ENCODE measurements at regions of chr1 and their contacts with region 1.

Region 1: GRCh38 chr1:55284852-55285251 is 69.7 kb upstream of the USP24 start:
- DNase-seq: peak in 4 of 5 donors; percentile 25 to 61 (median 42)
- H3K4me3 ChIP-seq: no peak overlapping the region
- H3K27ac ChIP-seq: no peak overlapping the region
- H3K4me1 ChIP-seq: peaks cover 2% of the 10 kb centered on the region
- H3K27me3 ChIP-seq: no peaks in the 10 kb centered on the region
- CTCF ChIP-seq: peak in 2 of 3 donors; percentile 53 to 64
- EP300 ChIP-seq: no peak
- POLR2A ChIP-seq: no peak

Region 2: DNA sequence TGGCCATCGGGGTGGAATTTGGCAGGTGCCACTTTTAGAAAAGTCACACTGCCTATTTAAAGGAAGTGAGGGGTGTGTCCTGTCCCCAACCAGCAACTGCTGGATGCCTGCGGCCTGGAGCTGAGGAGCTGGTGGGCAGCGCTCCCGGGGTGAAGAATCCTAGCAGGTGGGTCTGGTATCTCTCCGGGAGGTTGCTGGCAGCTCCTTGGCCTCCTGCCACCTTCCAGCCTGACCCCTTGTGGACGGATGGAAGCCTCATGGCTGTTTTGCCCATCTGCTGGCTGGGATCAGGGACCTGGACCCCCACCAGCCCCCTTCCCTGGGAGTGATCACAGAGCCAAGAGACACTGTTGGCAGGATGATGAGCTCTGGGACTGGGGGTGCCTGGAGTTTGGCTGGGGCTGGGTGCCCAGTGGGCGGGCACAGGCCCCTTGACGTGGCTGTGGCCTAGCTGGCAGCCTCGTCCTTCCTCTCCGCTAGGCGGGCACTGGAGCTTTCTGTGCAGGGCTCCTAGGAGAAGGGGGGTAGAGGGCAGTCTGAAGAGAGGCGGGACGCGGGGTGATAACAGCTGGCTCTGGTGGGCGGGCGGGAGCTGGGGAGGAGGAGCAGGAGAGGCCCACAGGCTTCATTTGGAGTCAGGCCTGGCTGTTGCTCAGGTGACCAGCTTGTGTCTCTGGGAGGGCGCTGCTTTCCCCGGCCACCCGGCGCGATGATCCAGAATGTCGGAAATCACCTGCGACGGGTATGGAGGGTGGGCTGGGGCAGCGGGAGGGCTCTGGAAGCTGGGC is 737.1 kb before region 1 on chr1 and contains the start of gene ACOT11:
- intact Hi-C with region 1: no loop called
- DNase-seq: peak; percentile 89 to 95 (median 91)
- H3K4me3 ChIP-seq: peak within 1 kb of the TSS; percentile 27
- H3K27ac ChIP-seq: peak within 1 kb of the TSS; percentile 33 to 87
- H3K4me1 ChIP-seq: peaks cover 12% of the 10 kb centered on the region
- H3K27me3 ChIP-seq: no peaks in the 10 kb centered on the region
- CTCF ChIP-seq: peak; percentile 53 to 75 (median 62)
- EP300 ChIP-seq: no peak
- POLR2A ChIP-seq: no peak
- total RNA-seq, gene ACOT11: 7.6 to 28.4 (median 17.0) TPM

Region 3: DNA sequence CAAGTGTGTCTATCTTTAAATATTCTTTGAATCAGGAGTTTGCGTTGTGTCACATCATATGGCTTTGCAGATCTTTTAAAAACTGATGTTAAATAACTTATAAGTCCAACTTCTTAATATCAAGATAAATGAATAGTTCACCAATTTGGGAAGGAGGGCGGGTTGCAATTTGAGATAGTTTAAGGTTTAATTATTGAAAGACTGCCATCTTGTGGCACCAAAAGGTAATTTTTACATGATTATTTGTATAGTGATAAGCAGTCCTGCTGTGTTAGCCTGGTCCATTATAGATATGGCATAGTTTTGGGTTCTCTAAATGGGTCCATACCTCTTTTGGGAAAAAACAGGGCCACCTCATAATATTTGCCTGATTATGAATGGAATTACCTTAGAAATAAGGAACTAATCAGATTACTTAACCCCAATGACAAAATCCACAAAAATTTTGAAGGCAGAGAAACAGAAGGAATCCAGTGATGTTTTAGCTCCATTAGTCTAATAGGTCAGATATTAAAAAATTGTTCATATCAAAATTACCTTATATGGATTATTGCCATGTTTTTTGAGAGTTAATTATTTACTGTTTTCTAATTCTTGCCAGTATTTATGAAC is 1424.5 kb after region 1 on chr1:
- intact Hi-C with region 1: loop called in 2 of 4 experiments (anchors 5 to 10 kb)
- DNase-seq: no peak
- H3K4me3 ChIP-seq: no peak overlapping the region
- H3K27ac ChIP-seq: no peak overlapping the region
- H3K4me1 ChIP-seq: no peaks in the 10 kb centered on the region
- H3K27me3 ChIP-seq: no peaks in the 10 kb centered on the region
- CTCF ChIP-seq: peak in 1 of 3 donors; percentile 24
- EP300 ChIP-seq: no peak
- POLR2A ChIP-seq: no peak

Measured in ovary (tissue), 10 donors.